Heart right ventricle (tissue), 16 donors: ENCODE measurements at regions of chr6 and their contacts with region 1.

Region 1: GRCh38 chr6:36759148-36759759 is 61.6 kb downstream of the RAB44 start:
- DNase-seq: peak; percentile 80 to 85
- ATAC-seq: peak; percentile 80 to 91 (median 86)
- H3K4me3 ChIP-seq: no peak overlapping the region
- H3K27ac ChIP-seq: no peak overlapping the region
- H3K4me1 ChIP-seq: peaks cover 0 to 43% (median 14%) of the 10 kb centered on the region in 9 donors
- H3K27me3 ChIP-seq: no peaks in the 10 kb centered on the region
- CTCF ChIP-seq: peak; percentile 93 to 98 (median 96)

Region 2: GRCh38 chr6:36423101-36423824 is 336.0 kb before region 1 on chr6:
- intact Hi-C with region 1: loop called in 5 of 10 experiments (anchors 10 kb)
- DNase-seq: peak; percentile 98 to 99
- ATAC-seq: peak; percentile 100
- H3K4me3 ChIP-seq: peak overlapping the region; percentile 15 to 67 (median 57)
- H3K27ac ChIP-seq: peak overlapping the region; percentile 3 to 85 (median 68)
- H3K4me1 ChIP-seq: peaks cover 0 to 15% (median 8%) of the 10 kb centered on the region in 9 donors
- H3K27me3 ChIP-seq: no peaks in the 10 kb centered on the region
- CTCF ChIP-seq: peak in 8 of 9 donors; percentile 58 to 81 (median 66)

Region 3: DNA sequence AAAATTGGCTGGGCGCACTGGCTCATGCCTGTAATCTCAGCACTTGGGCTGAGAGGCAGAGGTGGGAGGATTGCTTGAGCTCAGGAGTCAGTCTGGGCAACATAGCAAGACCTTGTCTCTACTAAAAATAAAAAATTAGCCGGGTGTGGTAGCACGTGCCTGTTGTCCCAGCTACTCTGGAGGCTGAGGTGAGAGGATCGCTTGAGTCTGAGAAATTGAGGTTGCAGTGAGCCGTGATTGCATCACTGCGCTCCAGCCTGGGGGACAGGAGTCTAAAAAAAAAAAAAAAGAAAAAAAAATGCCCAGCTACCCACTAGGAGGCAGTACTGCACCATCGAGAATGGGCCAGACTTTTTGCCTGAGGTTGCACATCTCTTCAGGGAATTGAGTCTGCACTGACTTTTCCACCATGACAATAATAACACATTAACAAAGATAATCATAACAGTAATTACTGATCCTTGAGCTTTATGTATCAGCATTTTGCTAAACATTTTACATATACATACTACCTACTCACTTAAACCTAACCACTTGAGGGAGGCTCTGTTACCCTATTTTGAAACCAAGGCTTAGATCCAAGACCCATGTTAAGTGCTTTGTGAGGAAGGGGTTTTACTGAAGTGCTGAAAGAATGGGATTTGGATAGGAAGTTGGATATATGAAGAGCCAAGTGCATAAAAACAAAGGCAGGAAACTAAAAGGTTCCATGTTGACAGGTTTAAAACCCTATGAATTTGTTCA is 144.1 kb before region 1 on chr6:
- intact Hi-C with region 1: loop called in 8 of 10 experiments (anchors 1 to 10 kb)
- DNase-seq: no peak
- ATAC-seq: peak in 7 of 8 donors; percentile 45 to 82 (median 73)
- H3K4me3 ChIP-seq: no peak overlapping the region
- H3K27ac ChIP-seq: peak overlapping the region in 4 of 10 donors; percentile 11 to 32 (median 20)
- H3K4me1 ChIP-seq: peaks cover 2 to 46% (median 25%) of the 10 kb centered on the region in 9 donors
- H3K27me3 ChIP-seq: no peaks in the 10 kb centered on the region
- CTCF ChIP-seq: peak; percentile 47 to 73 (median 65)

Region 4: GRCh38 chr6:36623547-36624459 is 135.5 kb before region 1 on chr6:
- intact Hi-C with region 1: loop called (anchors 2 to 10 kb)
- DNase-seq: peak; percentile 82 to 91
- ATAC-seq: peak; percentile 63 to 75 (median 70)
- H3K4me3 ChIP-seq: no peak overlapping the region
- H3K27ac ChIP-seq: peak overlapping the region in 1 of 10 donors; percentile 29
- H3K4me1 ChIP-seq: peaks cover 0 to 71% (median 52%) of the 10 kb centered on the region in 9 donors
- H3K27me3 ChIP-seq: no peaks in the 10 kb centered on the region
- CTCF ChIP-seq: peak; percentile 66 to 93 (median 87)

Region 5: DNA sequence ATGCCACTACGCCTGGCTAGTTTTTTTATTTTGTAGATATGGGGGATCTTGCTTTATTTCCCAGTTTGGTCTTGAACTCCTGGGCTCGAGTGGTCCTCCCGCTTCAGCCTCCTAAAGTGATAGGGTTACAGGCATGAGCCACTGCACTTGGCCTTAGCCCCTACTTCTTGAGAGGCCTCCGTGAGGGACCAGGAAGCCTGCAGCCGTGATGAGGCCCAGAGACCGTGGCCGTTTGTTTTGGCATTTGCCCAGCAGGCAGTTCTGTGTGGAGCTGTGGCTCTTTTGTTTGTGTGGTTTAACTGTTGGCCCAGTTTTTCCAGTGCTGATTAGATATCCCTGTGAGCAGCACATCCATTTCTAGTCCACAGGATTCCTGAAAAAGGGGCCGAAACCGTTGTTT is 125.3 kb before region 1 on chr6:
- intact Hi-C with region 1: no loop called
- DNase-seq: peak; percentile 73 to 77
- ATAC-seq: peak; percentile 55 to 85 (median 64)
- H3K4me3 ChIP-seq: no peak overlapping the region
- H3K27ac ChIP-seq: peak overlapping the region in 9 of 10 donors; percentile 4 to 75 (median 47)
- H3K4me1 ChIP-seq: peaks cover 0 to 33% (median 18%) of the 10 kb centered on the region in 9 donors
- H3K27me3 ChIP-seq: no peaks in the 10 kb centered on the region
- CTCF ChIP-seq: no peak

Region 6: GRCh38 chr6:36692220-36692619 is 67.0 kb before region 1 on chr6:
- intact Hi-C with region 1: loop called in 3 of 10 experiments (anchors 5 to 10 kb)
- DNase-seq: no peak
- ATAC-seq: peak in 3 of 8 donors; percentile 28 to 44 (median 36)
- H3K4me3 ChIP-seq: no peak overlapping the region
- H3K27ac ChIP-seq: peak overlapping the region in 1 of 10 donors; percentile 27
- H3K4me1 ChIP-seq: peaks cover 0 to 23% (median 14%) of the 10 kb centered on the region in 9 donors
- H3K27me3 ChIP-seq: no peaks in the 10 kb centered on the region
- CTCF ChIP-seq: no peak

Region 7: GRCh38 chr6:37303932-37304363 is 544.7 kb after region 1 on chr6:
- intact Hi-C with region 1: no loop called
- DNase-seq: no peak
- ATAC-seq: peak in 3 of 8 donors; percentile 33 to 51 (median 40)
- H3K4me3 ChIP-seq: no peak overlapping the region
- H3K27ac ChIP-seq: no peak overlapping the region
- H3K4me1 ChIP-seq: peaks cover 0 to 12% (median 7%) of the 10 kb centered on the region in 9 donors
- H3K27me3 ChIP-seq: no peaks in the 10 kb centered on the region
- CTCF ChIP-seq: peak in 7 of 9 donors; percentile 6 to 62 (median 47)